ENCODE measurements at regions of chr12 and their contacts with region 1.

Region 1: DNA sequence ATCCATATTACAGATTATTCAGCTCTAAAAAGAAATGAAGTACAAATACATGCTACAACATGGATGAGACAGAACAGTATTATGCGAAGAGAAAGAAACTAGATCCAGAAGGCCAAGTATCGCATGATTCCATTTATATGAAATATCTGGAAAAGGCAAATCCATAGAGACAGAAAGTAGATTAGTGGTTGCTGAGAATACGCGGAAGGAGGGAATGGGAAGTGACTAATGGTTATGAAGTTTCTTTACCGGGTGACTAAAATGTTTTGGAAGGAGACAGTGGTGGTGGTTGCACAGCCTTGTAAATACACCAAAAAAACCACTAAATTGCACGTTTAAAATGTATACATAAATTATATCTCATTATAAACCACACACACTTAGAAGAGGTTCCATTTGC is 12.5 kb downstream of the PRDM4 start:
- H3K4me3 Mint-ChIP-seq: no peak overlapping the region
- H3K27ac Mint-ChIP-seq: no peak overlapping the region
- H3K4me1 Mint-ChIP-seq: no peaks in the 10 kb centered on the region
- H3K27me3 Mint-ChIP-seq: no peaks in the 10 kb centered on the region

Region 2: DNA sequence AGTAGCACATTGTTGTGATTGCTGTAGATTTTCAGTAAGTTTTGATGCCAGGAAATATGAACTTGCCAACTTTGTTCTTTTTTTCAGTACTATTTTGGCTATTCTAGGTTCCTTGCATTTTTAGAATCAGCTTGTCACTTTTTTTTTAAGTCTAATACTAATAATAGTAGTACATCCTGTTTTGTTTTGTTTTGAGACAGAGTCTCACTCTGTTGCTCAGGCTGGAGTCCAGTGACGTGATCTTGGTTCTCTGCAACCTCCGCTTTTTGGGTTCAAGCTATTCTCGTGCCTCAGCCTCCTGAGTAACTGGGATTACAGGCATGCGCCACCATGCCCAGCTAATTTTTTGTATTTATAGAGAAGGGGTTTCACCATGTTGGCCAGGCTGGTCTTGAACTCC is 46.4 kb before region 1 on chr12:
- intact Hi-C with region 1: loop called (anchors 5 kb)
- H3K4me3 Mint-ChIP-seq: no peak overlapping the region
- H3K27ac Mint-ChIP-seq: no peak overlapping the region
- H3K4me1 Mint-ChIP-seq: no peaks in the 10 kb centered on the region
- H3K27me3 Mint-ChIP-seq: no peaks in the 10 kb centered on the region